ENCODE measurements at regions of chr9 and their contacts with region 1.

Region 1: DNA sequence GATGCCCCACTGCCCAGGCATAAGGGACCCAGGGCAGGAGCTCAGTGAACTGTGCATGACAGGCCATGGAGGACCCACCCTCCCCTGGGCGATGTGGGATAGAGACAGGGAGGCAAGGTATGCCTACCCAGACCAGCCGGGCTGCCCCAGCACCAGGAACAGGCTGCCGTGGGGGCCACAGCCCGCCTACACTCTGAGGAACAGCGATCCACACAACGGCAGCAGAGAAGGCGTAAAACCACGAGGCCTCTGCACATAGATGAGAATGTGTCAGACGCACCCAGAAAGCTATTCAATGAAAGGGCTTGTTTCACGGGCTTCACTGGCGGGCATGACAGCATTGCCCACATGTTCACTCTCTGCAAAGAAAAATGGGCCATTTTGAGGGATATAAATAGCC is 49.5 kb downstream of the SEMA4D start:
- DNase-seq: peak in 1 of 5 donors; percentile 65
- H3K4me3 ChIP-seq: peak overlapping the region in 1 of 2 donors; percentile 13
- H3K4me3 Mint-ChIP-seq: peak overlapping the region in 7 of 8 donors; percentile 35 to 90 (median 70)
- H3K27ac ChIP-seq: peak overlapping the region; percentile 49
- H3K27ac Mint-ChIP-seq: peak overlapping the region; percentile 86 to 97 (median 92)
- H3K4me1 ChIP-seq: peaks cover 97% of the 10 kb centered on the region
- H3K4me1 Mint-ChIP-seq: peaks cover 78 to 96% (median 88%) of the 10 kb centered on the region in 4 donors
- H3K27me3 ChIP-seq: no peaks in the 10 kb centered on the region
- H3K27me3 Mint-ChIP-seq: no peaks in the 10 kb centered on the region

Region 2: DNA sequence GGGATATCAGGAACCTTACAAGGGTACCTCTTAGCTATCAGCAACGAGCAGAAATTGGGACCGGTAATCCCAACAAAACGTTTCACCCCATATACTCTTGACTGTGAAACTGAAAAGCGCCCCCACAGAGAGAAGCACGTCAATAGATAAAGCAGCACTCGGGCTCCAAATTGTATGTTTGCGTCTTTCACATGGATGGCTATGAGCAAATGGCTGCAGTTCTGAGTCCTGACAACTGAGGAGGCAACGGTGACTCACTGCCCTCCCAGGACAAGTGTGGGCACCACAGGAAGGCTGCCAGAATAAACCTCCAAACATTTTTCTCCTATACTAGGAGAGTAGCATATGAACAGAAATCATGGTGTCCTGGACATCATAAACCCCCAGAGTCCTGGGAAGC is 12.9 kb after region 1 on chr9:
- CTCF ChIA-PET with region 1: interaction called, 3 read pairs
- POLR2A ChIA-PET with region 1: interaction called, 609 read pairs
- intact Hi-C with region 1: no loop called
- DNase-seq: peak in 1 of 5 donors; percentile 70
- H3K4me3 ChIP-seq: no peak overlapping the region
- H3K4me3 Mint-ChIP-seq: peak overlapping the region in 7 of 8 donors; percentile 36 to 80 (median 65)
- H3K27ac ChIP-seq: peak overlapping the region; percentile 45
- H3K27ac Mint-ChIP-seq: peak overlapping the region; percentile 78 to 98 (median 92)
- H3K4me1 ChIP-seq: peaks cover 100% of the 10 kb centered on the region
- H3K4me1 Mint-ChIP-seq: peaks cover 81 to 100% (median 95%) of the 10 kb centered on the region in 4 donors
- H3K27me3 ChIP-seq: no peaks in the 10 kb centered on the region
- H3K27me3 Mint-ChIP-seq: no peaks in the 10 kb centered on the region